Left ventricle myocardium superior (tissue), 1 donor: ENCODE measurements at regions of chr7 and their contacts with region 1.

Region 1: DNA sequence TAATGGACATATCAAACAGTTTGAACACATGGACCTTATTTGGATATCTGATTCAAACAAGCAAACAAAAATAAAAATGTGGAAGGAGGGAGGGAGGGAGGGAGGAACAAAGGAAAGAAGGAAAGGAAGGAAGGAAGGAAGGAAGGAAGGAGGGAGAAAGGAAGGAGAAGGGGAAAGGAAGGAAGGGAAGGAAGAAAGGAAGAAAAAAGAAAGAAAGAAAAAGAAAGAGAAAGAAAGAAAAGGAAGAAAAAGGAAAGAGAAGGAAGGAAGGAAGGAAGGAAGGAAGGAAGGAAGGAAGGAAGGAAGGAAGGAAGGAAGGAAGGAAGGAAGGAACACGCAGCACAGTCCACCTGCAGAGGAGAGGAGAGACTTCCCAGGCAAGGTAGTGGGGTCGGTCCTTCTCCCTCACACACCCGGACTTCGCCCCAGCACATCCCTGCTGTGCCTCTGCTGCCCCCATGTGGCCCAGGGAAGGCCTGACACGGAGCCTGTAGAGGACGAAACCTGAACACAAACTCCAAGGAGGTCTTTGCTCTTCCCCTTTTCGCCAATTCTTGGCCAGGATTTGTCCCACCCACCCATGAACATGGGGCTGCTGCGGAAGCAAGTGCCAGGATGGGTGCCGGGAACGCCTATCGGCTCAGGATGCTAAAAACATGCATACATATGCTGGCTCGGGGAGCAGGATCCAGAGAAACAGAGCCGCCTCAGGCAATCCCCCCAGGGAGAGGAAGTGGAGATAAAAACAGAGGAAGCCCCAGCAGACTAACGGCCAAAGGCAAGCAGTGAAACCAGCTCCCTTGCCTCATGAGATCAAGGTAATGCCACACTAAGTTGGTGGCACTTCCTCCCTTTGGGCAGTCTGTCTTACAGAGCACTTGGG is 52.3 kb upstream of the DGKI start:
- DNase-seq: peak; percentile 90
- ATAC-seq: peak; percentile 94

Region 2: GRCh38 chr7:137656227-137656849 is 242.7 kb before region 1 on chr7:
- intact Hi-C with region 1: loop called (anchors 2 kb)
- DNase-seq: peak; percentile 82
- ATAC-seq: peak; percentile 88

Region 3: GRCh38 chr7:138008547-138009349 is 109.7 kb after region 1 on chr7:
- intact Hi-C with region 1: loop called (anchors 2 kb)
- DNase-seq: no peak
- ATAC-seq: peak; percentile 63